Mammary epithelial cell (primary cell): ENCODE measurements at regions of chr11 and their contacts with region 1.

Region 1: DNA sequence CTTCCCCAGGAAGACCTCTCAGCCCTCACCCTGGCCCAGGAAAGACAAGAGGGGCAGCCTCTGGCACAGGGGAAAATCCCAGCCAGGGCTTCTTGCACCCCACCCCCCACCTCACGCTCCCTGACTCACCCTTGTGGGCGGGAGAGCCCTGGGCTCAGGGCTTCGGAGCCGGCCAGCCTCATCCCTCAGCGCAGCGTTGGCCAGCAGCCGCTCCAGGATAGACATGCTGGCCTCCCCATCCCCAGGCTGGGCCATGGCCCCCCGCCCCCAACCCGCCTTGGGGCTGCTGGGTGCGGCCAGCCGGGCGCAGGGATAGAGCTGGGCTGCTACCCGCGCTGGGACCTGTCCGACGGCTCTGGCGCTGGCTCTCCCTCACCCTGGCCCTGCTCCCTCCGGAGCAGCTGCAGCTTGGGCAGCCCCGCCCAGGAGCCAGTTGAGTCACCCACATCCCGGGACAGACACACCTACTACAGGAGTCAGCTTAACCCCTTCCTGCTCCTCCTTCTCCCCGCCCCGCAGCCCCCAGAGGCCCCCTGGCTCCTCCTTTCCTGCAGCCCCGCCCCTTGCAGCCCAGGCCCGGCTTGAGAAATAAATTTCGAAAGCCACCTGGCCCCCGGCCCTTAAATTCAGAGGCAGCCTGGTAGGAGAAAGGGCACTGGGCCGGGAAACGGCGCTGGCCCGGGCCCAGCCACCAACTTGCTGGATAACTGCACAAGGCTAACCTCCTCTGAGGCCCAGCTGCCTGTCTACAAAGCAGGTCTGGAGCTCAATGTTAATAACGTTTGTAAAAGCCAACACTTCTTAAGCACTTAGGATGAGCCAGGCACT is 13.4 kb downstream of the TNKS1BP1 start:
- DNase-seq: peak; percentile 96
- H3K4me3 ChIP-seq: peak overlapping the region; percentile 37 to 64 (median 55)
- H3K27ac ChIP-seq: peak overlapping the region; percentile 80
- H3K4me1 ChIP-seq: peaks cover 63% of the 10 kb centered on the region
- H3K27me3 ChIP-seq: no peaks in the 10 kb centered on the region
- CTCF ChIP-seq: no peak

Region 2: DNA sequence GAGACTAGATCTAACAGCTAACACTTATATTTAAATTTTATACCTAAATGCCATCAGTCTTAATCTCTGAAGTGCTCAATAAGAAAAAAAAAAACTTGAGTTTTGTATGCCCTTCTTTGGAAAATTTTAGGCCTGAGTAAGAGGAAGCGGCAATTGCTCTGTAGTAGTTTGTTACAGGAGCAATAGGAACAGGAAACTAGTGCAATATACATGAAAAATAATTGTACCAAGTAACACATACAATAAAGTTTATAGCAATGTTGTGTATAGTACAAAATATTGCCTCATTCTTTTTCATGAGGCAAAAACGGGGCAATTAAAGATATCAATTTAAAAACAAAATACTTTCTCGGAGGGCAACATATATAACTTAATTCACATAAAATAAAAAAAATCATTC is 302.9 kb before region 1 on chr11:
- CTCF ChIA-PET with region 1: no interaction called
- dilution Hi-C with region 1: no loop called
- in situ Hi-C with region 1: no loop called
- intact Hi-C with region 1: no loop called
- DNase-seq: no peak
- H3K4me3 ChIP-seq: no peak overlapping the region
- H3K27ac ChIP-seq: no peak overlapping the region
- H3K4me1 ChIP-seq: no peaks in the 10 kb centered on the region
- H3K27me3 ChIP-seq: peaks cover 4% of the 10 kb centered on the region
- CTCF ChIP-seq: no peak

Region 3: GRCh38 chr11:57277845-57278709 is 33.2 kb before region 1 on chr11:
- CTCF ChIA-PET with region 1: no interaction called
- dilution Hi-C with region 1: no loop called
- in situ Hi-C with region 1: no loop called
- intact Hi-C with region 1: loop called (anchors 1 kb)
- DNase-seq: peak; percentile 64
- H3K4me3 ChIP-seq: no peak overlapping the region
- H3K27ac ChIP-seq: peak overlapping the region; percentile 62
- H3K4me1 ChIP-seq: peaks cover 36% of the 10 kb centered on the region
- H3K27me3 ChIP-seq: no peaks in the 10 kb centered on the region
- CTCF ChIP-seq: peak; percentile 82 to 93

Region 4: DNA sequence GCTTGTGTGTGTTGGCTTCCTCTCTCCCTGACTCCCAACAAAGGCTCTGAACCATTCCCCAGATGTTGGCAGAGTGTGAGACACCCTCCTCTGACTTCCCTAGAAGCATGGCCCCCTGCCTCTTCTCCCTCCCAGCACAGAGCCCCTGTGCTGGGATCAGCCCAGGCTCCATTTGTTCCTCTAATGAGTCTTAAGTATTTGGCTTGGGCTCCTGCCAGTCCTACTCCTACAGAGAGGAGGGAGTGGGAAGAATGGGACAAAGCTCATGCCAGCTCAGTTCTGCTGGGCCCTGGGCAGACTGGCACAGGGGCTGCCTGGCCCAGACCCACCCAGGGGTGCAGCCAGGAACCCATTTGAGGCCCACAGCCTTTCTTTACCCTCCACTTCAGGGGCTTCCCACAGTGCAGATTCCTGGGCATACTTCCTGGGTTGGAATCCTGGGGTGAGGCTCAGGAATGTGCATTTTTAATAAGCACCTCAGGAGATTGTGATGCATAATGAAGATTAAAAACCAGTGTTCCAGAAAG is 16.7 kb before region 1 on chr11:
- CTCF ChIA-PET with region 1: no interaction called
- dilution Hi-C with region 1: no loop called
- in situ Hi-C with region 1: no loop called
- intact Hi-C with region 1: loop called (anchors 2 kb)
- DNase-seq: peak; percentile 53
- H3K4me3 ChIP-seq: no peak overlapping the region
- H3K27ac ChIP-seq: peak overlapping the region; percentile 47
- H3K4me1 ChIP-seq: peaks cover 50% of the 10 kb centered on the region
- H3K27me3 ChIP-seq: no peaks in the 10 kb centered on the region
- CTCF ChIP-seq: no peak

Region 5: GRCh38 chr11:57568330-57568766 is 257.0 kb after region 1 on chr11:
- CTCF ChIA-PET with region 1: no interaction called
- dilution Hi-C with region 1: no loop called
- in situ Hi-C with region 1: no loop called
- intact Hi-C with region 1: no loop called
- DNase-seq: peak; percentile 68
- H3K4me3 ChIP-seq: peak overlapping the region; percentile 77 to 96 (median 90)
- H3K27ac ChIP-seq: no peak overlapping the region
- H3K4me1 ChIP-seq: peaks cover 27% of the 10 kb centered on the region
- H3K27me3 ChIP-seq: no peaks in the 10 kb centered on the region
- CTCF ChIP-seq: peak; percentile 94 to 97